Ascending aorta (tissue), 2 donors: ENCODE measurements at regions of chr13 and their contacts with region 1.

Region 1: GRCh38 chr13:30306762-30307193 is 573 bp downstream of the KATNAL1 start:
- DNase-seq: peak; percentile 65 to 94
- H3K4me3 ChIP-seq: peak overlapping the region; percentile 91 to 93
- H3K27ac ChIP-seq: peak overlapping the region; percentile 83 to 90
- H3K4me1 ChIP-seq: peaks cover 5 to 11% of the 10 kb centered on the region in 2 donors
- H3K27me3 ChIP-seq: no peaks in the 10 kb centered on the region
- CTCF ChIP-seq: no peak

Region 2: DNA sequence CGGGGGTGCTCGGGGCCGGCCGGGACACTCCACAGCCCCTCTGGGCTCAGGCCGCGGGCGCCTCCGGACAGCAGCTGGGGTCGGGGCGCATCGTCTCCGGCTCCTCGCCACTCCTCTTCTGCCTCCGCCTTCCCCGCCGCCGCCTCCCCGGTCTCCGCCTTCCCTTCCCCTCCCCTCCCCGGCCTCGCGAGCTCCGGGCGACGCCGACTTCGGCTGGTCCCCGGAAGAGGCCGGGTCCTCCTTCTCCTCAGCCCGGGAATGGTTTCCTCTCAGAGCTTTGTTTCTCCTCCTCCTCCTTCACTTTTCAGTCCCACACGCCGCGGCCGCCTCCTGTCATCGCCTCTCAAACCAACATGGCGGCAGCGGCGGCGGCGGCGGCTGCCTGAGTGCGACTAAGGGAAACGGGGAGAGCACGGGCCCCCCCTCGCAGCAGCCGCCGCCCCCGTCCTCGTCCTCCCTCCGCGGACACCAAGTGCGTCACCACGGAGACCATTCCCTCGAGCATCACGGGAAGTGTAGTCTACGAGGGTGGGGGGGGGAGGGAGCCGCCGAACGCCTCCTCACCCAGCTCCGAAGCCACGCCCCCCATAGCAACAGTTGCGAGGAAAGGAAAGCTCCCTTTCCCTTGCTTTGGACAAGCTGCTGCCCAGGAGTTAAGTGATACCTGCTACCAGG is 456.4 kb before region 1 on chr13 and contains the start of gene UBL3:
- intact Hi-C with region 1: loop called (anchors 1 kb)
- DNase-seq: peak; percentile 91 to 98
- H3K4me3 ChIP-seq: peak within 1 kb of the TSS; percentile 76 to 95
- H3K27ac ChIP-seq: peak within 1 kb of the TSS; percentile 97 to 98
- H3K4me1 ChIP-seq: peaks cover 0 to 11% of the 10 kb centered on the region in 2 donors
- H3K27me3 ChIP-seq: no peaks in the 10 kb centered on the region
- CTCF ChIP-seq: no peak
- total RNA-seq, gene UBL3: 17.9 TPM

Region 3: DNA sequence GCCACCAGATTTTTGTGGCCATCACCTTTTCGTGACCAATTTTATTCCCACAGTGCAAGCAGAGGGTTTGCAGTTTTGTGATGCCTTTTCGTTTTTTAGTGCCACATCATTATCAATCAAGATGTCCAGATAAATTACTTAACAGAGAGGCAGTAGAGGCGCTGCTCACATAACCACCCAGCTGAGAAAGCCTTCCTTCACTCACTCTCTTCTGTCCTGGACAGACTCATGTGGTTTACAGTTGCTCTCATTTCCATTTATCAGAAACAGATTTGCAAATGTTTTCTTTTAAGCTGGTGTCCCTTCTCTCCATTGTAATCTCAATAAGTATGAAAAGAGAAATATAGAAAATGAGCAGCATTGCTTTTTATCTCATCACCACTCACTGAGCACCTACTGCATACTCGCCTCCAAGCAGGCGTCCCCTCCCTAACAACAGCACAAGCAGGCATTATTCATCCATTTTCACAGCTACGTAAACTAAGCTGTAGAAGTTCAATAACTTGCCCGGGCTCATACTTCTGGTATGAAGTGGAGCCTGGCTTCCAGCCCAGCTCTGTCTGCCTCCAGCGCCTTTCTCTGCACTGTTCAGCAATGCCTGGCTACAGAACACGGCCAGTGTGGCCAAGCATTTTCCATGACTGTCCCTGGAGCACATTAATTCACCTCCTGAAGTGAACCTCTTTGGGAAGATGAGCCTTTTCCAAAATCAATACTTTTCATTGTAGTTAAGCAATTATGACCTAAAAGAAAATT is 35.2 kb after region 1 on chr13:
- intact Hi-C with region 1: loop called (anchors 1 kb)
- DNase-seq: peak; percentile 45 to 94
- H3K4me3 ChIP-seq: peak overlapping the region in 1 of 2 donors; percentile 15
- H3K27ac ChIP-seq: peak overlapping the region; percentile 77 to 83
- H3K4me1 ChIP-seq: peaks cover 4 to 20% of the 10 kb centered on the region in 2 donors
- H3K27me3 ChIP-seq: no peaks in the 10 kb centered on the region
- CTCF ChIP-seq: no peak

Region 4: DNA sequence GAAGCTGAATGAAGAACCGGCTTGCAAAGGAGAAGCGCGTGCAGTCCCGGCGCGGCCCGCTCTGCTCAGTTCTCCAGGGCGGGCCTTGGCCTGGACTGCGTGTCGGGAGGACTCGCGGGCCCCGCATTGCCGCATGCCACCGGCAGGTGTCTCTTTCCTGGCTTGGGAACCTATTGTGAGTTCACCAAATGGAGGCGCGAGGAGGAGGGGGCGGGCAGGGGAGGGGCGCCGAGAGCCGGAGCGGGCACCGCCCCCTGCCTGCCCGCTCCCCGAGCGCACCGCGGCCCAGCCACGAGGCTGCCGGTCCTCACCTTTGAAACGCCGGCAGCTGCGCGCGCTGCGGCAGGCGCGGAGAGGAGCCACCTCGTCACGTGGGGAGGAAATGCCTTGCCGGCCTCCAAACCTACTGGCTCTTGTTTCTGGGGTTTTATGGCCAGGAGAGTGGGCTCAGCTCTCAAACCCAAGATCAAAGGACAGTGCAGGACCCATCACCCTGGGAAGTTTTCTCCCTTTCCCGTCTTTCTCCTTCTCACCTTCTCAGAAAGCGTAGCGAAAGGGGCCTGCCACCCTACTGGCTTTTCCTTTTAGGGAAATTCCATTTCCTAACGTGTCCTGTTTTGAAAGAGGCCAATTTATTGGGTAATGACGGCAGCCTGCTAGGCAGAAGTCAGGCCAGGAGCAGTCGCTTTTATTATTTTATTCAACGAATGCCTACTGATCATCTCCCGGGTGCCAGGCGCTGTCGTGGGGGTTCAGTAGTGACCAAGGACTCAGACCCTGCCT is 101.7 kb after region 1 on chr13:
- intact Hi-C with region 1: loop called (anchors 1 kb)
- DNase-seq: peak; percentile 71 to 97
- H3K4me3 ChIP-seq: peak overlapping the region; percentile 39 to 55
- H3K27ac ChIP-seq: peak overlapping the region; percentile 95 to 96
- H3K4me1 ChIP-seq: peaks cover 5 to 21% of the 10 kb centered on the region in 2 donors
- H3K27me3 ChIP-seq: no peaks in the 10 kb centered on the region
- CTCF ChIP-seq: peak; percentile 75 to 91 (median 90)